ENCODE measurements at regions of chr2 and their contacts with region 1.

Region 1: DNA sequence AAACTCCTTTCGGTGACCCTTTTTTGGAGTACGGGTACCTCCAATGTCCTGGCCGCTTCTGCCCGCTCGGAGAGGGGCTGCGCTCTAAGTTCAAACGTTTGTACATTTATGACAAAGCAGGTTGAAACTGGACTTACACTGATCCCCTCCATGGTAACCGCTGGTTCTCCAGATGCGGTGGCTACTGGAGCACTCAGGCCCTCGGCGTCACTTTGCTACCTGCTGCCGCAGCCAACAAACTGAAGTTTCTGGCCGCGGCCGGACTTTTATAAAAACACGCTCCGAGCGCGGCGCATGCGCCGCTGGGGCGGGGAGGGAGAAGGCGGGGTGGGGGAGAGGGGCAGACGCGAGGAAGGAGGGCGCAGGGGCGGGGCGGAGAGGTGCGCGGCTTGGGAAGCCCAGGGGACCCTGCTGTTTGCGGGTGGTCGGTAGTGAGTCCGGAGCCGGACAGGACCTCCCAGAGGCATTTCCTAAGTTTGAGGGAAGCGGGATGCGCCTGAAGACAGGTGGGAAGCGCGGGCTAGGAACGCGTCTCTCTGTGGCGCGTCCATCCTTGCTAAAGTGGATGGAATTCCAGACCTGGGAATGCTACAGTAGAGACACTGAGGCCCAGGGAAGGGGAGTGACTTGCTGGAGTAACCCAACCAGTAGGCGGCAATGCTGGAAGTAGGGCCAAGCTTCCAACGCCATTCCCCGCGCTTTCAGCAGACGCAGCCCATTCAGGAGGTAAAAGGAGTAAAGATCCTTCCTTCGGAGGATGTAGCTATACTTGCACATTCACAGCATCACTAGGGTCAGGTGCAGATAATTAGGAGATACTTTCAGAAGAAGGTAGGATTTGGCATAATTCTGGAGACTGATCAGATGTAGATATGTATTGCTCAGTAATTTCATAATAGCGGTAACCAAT is at the start of gene CXCR4:
- DNase-seq: peak in 6 of 10 donors; percentile 39 to 66 (median 60)
- H3K4me3 ChIP-seq: peak within 1 kb of the TSS; percentile 42 to 77 (median 66)
- H3K27ac ChIP-seq: peak within 1 kb of the TSS in 31 of 59 donors; percentile 5 to 85 (median 39)
- H3K27me3 ChIP-seq: peaks cover 0 to 44% (median 4%) of the 10 kb centered on the region in 45 donors
- CTCF ChIP-seq: peak in 37 of 56 donors; percentile 11 to 42 (median 26)
- total RNA-seq, gene CXCR4: 1.3 to 40.8 (median 6.2) TPM

Region 2: GRCh38 chr2:135985018-135985825 is 132.9 kb before region 1 on chr2 and contains the start of gene DARS1:
- intact Hi-C with region 1: loop called in 1 of 2 experiments (anchors 5 kb)
- DNase-seq: peak; percentile 62 to 92 (median 88)
- H3K4me3 ChIP-seq: peak within 1 kb of the TSS; percentile 61 to 100 (median 96)
- H3K27ac ChIP-seq: peak within 1 kb of the TSS; percentile 35 to 98 (median 93)
- H3K27me3 ChIP-seq: no peaks in the 10 kb centered on the region
- CTCF ChIP-seq: peak in 5 of 56 donors; percentile 8 to 17 (median 13)
- total RNA-seq, gene DARS1: 30.3 to 79.7 (median 46.5) TPM

Region 3: DNA sequence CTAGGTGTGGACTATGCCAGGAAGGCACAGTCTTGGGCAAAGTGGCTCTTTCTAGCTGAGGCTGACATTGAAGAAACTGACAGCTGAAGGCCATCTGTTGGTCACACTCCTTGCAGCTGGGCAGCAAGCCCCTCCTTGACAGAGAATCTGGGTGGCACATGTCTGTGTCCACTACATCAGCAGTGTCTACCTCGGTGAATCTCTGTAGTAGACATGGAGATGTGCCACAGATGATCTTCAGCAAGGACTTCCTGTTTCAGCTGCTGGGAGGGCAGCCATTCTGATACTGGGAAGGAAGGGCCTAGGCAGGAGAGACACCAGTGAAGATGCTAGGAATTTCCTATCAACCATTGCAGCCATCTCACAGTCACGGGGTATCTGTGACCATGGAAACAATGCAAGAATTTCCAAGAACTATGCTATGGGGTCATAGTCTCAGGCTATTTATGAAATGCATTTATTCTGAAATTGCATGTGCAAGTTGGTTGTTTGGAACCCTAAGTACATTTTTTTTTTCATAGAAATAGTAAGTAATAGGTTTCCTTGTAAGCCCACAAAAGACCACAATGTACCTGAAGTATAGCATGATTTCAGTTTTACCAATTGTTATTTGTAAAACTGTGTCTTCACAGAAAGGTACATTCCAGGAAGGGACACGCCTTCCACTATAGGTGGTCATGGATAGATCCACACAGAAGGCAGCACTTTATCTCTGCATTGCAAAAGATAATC is 69.0 kb before region 1 on chr2:
- intact Hi-C with region 1: loop called in 1 of 2 experiments (anchors 10 kb)
- DNase-seq: no peak
- H3K4me3 ChIP-seq: no peak overlapping the region
- H3K27ac ChIP-seq: peak overlapping the region in 44 of 59 donors; percentile 1 to 80 (median 58)
- H3K27me3 ChIP-seq: no peaks in the 10 kb centered on the region
- CTCF ChIP-seq: no peak

Region 4: DNA sequence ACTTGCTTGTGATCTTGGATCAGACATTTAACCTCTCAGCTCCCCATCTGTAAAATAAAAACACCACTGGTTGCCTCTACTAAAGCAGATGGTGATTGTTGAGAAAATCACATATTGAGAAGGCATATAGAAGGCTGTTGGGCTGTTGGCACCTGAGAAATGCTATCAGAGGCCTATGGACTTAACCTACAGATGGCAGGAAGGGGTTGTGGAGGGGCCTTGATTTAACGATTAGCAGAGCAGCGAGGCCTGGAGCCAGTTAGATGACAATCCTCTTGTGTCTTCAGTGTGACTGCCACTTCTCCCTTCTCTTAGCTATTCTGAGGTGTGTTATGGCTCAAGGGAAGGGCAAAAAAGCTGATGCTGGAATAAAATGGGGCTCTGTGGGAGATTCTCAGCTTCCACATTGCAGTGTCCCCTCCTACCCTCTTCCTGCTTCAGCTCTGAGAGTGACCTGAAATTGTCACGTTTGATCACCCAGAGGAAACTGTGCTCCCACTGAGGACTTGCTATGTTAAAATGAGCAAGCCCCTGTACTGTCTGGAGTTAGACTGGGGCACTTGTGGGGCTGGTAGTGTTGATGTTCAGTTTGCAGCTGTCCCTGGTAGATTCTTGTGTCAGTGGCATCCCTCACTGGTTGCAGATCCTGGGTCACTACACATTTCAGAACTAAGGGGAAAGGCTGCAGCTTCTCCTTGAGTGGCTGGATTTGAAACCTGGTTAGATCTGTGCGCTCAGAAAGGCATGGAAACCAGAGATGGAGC is 31.7 kb before region 1 on chr2:
- intact Hi-C with region 1: no loop called
- DNase-seq: no peak
- H3K4me3 ChIP-seq: no peak overlapping the region
- H3K27ac ChIP-seq: no peak overlapping the region
- H3K27me3 ChIP-seq: no peaks in the 10 kb centered on the region
- CTCF ChIP-seq: no peak

Region 5: DNA sequence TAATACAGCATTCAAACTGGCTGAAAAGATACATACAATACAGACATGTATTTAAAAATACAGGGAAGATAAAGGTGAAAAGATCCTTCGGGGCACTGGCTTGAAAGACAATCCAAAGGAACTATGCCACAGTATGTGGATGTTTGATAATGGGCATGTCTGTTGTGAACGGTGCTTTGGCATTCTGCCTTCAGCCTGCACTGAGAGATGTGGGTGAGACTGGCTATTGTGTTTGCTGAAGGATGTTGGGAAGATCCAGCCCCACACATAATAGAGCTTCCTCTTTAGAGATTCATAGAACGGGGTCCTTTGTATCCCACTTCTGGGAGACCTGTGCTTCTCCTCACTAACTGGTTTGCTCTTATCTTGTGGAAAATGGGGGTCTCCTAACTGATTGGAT is 64.9 kb after region 1 on chr2:
- intact Hi-C with region 1: loop called in 1 of 2 experiments (anchors 5 kb)
- DNase-seq: peak in 2 of 10 donors; percentile 19 to 48
- H3K4me3 ChIP-seq: no peak overlapping the region
- H3K27ac ChIP-seq: no peak overlapping the region
- H3K27me3 ChIP-seq: no peaks in the 10 kb centered on the region
- CTCF ChIP-seq: no peak

Region 6: GRCh38 chr2:136342138-136342537 is 224.0 kb after region 1 on chr2:
- intact Hi-C with region 1: no loop called
- DNase-seq: no peak
- H3K4me3 ChIP-seq: no peak overlapping the region
- H3K27ac ChIP-seq: no peak overlapping the region
- H3K27me3 ChIP-seq: no peaks in the 10 kb centered on the region
- CTCF ChIP-seq: no peak

Region 7: GRCh38 chr2:136378712-136379595 is 260.8 kb after region 1 on chr2:
- intact Hi-C with region 1: loop called (anchors 5 to 10 kb)
- DNase-seq: peak in 5 of 10 donors; percentile 41 to 71 (median 63)
- H3K4me3 ChIP-seq: peak overlapping the region in 1 of 59 donors; percentile 12
- H3K27ac ChIP-seq: no peak overlapping the region
- H3K27me3 ChIP-seq: no peaks in the 10 kb centered on the region
- CTCF ChIP-seq: peak; percentile 41 to 91 (median 78)

Region 8: GRCh38 chr2:136613096-136613495 is 494.9 kb after region 1 on chr2:
- intact Hi-C with region 1: no loop called
- DNase-seq: no peak
- H3K4me3 ChIP-seq: no peak overlapping the region
- H3K27ac ChIP-seq: no peak overlapping the region
- H3K27me3 ChIP-seq: peaks cover 0 to 1% (median 0%) of the 10 kb centered on the region in 45 donors
- CTCF ChIP-seq: no peak

Measured in dorsolateral prefrontal cortex (tissue), 120 donors.